Activated CD4-positive, alpha-beta T cell treated with anti-CD3 and anti-CD28 coated beads, Interleukin-2, amount 10 ng/mL, durations not matched to agents 24 days and 14 days (primary cell): ENCODE measurements at regions of chr11 and their contacts with region 1.

Region 1: GRCh38 chr11:27319072-27319471 is 43.9 kb downstream of the CCDC34 start:
- DNase-seq: no peak
- H3K4me3 Mint-ChIP-seq: no peak overlapping the region
- H3K27ac Mint-ChIP-seq: no peak overlapping the region
- H3K4me1 Mint-ChIP-seq: peaks cover 8% of the 10 kb centered on the region
- H3K27me3 Mint-ChIP-seq: no peaks in the 10 kb centered on the region

Region 2: GRCh38 chr11:27300974-27301373 is 18.1 kb before region 1 on chr11:
- intact Hi-C with region 1: loop called (anchors 1 kb)
- DNase-seq: no peak
- H3K4me3 Mint-ChIP-seq: no peak overlapping the region
- H3K27ac Mint-ChIP-seq: no peak overlapping the region
- H3K4me1 Mint-ChIP-seq: peaks cover 1% of the 10 kb centered on the region
- H3K27me3 Mint-ChIP-seq: no peaks in the 10 kb centered on the region

Region 3: GRCh38 chr11:27362749-27363575 is 43.9 kb after region 1 on chr11 and contains the start of gene CCDC34:
- intact Hi-C with region 1: loop called (anchors 1 kb)
- DNase-seq: peak; percentile 97
- H3K4me3 Mint-ChIP-seq: peak within 1 kb of the TSS; percentile 97
- H3K27ac Mint-ChIP-seq: peak within 1 kb of the TSS; percentile 92
- H3K4me1 Mint-ChIP-seq: peaks cover 21% of the 10 kb centered on the region
- H3K27me3 Mint-ChIP-seq: peaks cover 2% of the 10 kb centered on the region
- total RNA-seq, gene CCDC34: 10.1 and 12.7 TPM in 2 replicates

Region 4: GRCh38 chr11:27388869-27389268 is 69.8 kb after region 1 on chr11:
- intact Hi-C with region 1: loop called (anchors 2 kb)
- DNase-seq: no peak
- H3K4me3 Mint-ChIP-seq: no peak overlapping the region
- H3K27ac Mint-ChIP-seq: no peak overlapping the region
- H3K4me1 Mint-ChIP-seq: peaks cover 2% of the 10 kb centered on the region
- H3K27me3 Mint-ChIP-seq: peaks cover 13% of the 10 kb centered on the region